ENCODE measurements at regions of chr22 and their contacts with region 1.

Region 1: GRCh38 chr22:37260901-37261336 is 16.9 kb upstream of the RAC2 start:
- DNase-seq: no peak
- ATAC-seq: peak; percentile 88
- H3K4me3 Mint-ChIP-seq: peak overlapping the region; percentile 2
- H3K27ac Mint-ChIP-seq: no peak overlapping the region
- H3K4me1 Mint-ChIP-seq: peaks cover 38% of the 10 kb centered on the region
- H3K27me3 Mint-ChIP-seq: no peaks in the 10 kb centered on the region
- CTCF ChIP-seq: peak; percentile 44

Region 2: GRCh38 chr22:36765943-36766450 is 494.9 kb before region 1 on chr22:
- CTCF ChIA-PET with region 1: no interaction called
- POLR2A ChIA-PET with region 1: no interaction called
- intact Hi-C with region 1: no loop called
- DNase-seq: no peak
- ATAC-seq: no peak
- H3K4me3 Mint-ChIP-seq: no peak overlapping the region
- H3K27ac Mint-ChIP-seq: no peak overlapping the region
- H3K4me1 Mint-ChIP-seq: no peaks in the 10 kb centered on the region
- H3K27me3 Mint-ChIP-seq: no peaks in the 10 kb centered on the region
- CTCF ChIP-seq: no peak

Region 3: GRCh38 chr22:37077884-37078485 is 182.9 kb before region 1 on chr22:
- CTCF ChIA-PET with region 1: interaction called, 8 read pairs
- POLR2A ChIA-PET with region 1: no interaction called
- intact Hi-C with region 1: loop called (anchors 1 kb)
- DNase-seq: peak; percentile 81
- ATAC-seq: peak; percentile 60
- H3K4me3 Mint-ChIP-seq: no peak overlapping the region
- H3K27ac Mint-ChIP-seq: peak overlapping the region; percentile 50
- H3K4me1 Mint-ChIP-seq: peaks cover 25% of the 10 kb centered on the region
- H3K27me3 Mint-ChIP-seq: no peaks in the 10 kb centered on the region
- CTCF ChIP-seq: peak; percentile 87

Region 4: DNA sequence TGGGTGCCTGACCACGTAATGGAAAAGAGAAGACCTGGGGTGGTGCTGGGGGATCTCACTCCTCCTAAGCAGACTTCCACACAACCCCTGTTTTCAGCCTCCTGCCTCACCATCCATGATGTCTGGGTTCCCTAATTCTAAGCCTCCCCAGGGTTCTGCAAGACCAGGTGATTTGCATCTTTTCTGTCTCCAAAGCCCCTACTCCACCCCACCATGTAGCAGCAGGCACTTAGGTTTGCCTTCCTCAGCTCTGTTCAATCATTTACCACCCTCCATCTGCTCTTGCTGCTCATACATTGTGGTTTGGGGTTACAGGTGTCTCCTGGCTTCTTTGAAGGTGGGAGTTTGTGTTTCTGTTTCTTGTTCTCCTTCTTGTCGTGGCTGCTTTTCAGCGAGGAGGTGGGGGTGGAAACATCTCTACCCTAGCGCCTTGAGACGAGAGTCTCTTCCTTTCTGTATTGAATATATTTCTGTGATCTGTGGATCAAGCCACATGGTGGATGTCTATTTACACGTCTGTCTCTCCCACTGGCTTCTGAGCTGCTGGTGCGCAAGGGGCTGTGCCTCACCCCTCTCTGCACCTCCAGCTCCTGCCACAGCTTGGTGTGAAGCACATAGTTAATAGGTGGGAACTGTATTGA is 42.0 kb before region 1 on chr22:
- CTCF ChIA-PET with region 1: interaction called, 59 read pairs
- POLR2A ChIA-PET with region 1: interaction called, 5 read pairs
- intact Hi-C with region 1: no loop called
- DNase-seq: no peak
- ATAC-seq: peak; percentile 83
- H3K4me3 Mint-ChIP-seq: peak overlapping the region; percentile 71
- H3K27ac Mint-ChIP-seq: peak overlapping the region; percentile 99
- H3K4me1 Mint-ChIP-seq: peaks cover 78% of the 10 kb centered on the region
- H3K27me3 Mint-ChIP-seq: no peaks in the 10 kb centered on the region
- CTCF ChIP-seq: no peak

Region 5: GRCh38 chr22:37244114-37244921 is 16.6 kb before region 1 on chr22 and contains the start of gene RAC2:
- CTCF ChIA-PET with region 1: interaction called, 139 read pairs
- POLR2A ChIA-PET with region 1: interaction called, 57 read pairs
- intact Hi-C with region 1: loop called (anchors 1 kb)
- DNase-seq: peak; percentile 77
- ATAC-seq: peak; percentile 59
- H3K4me3 Mint-ChIP-seq: peak within 1 kb of the TSS; percentile 97
- H3K27ac Mint-ChIP-seq: peak within 1 kb of the TSS; percentile 90
- H3K4me1 Mint-ChIP-seq: peaks cover 74% of the 10 kb centered on the region
- H3K27me3 Mint-ChIP-seq: no peaks in the 10 kb centered on the region
- CTCF ChIP-seq: no peak
- total RNA-seq, gene RAC2: 518 and 557 TPM in 2 replicates

Region 6: GRCh38 chr22:37282385-37282677 is 21.4 kb after region 1 on chr22 and contains the start of gene CYTH4:
- CTCF ChIA-PET with region 1: interaction called, 12 read pairs
- POLR2A ChIA-PET with region 1: interaction called, 4 read pairs
- intact Hi-C with region 1: no loop called
- DNase-seq: peak; percentile 64
- ATAC-seq: peak; percentile 69
- H3K4me3 Mint-ChIP-seq: peak within 1 kb of the TSS; percentile 86
- H3K27ac Mint-ChIP-seq: peak within 1 kb of the TSS; percentile 99
- H3K4me1 Mint-ChIP-seq: peaks cover 81% of the 10 kb centered on the region
- H3K27me3 Mint-ChIP-seq: no peaks in the 10 kb centered on the region
- CTCF ChIP-seq: no peak
- total RNA-seq, gene CYTH4: 37.2 and 40.3 TPM in 2 replicates

Region 7: DNA sequence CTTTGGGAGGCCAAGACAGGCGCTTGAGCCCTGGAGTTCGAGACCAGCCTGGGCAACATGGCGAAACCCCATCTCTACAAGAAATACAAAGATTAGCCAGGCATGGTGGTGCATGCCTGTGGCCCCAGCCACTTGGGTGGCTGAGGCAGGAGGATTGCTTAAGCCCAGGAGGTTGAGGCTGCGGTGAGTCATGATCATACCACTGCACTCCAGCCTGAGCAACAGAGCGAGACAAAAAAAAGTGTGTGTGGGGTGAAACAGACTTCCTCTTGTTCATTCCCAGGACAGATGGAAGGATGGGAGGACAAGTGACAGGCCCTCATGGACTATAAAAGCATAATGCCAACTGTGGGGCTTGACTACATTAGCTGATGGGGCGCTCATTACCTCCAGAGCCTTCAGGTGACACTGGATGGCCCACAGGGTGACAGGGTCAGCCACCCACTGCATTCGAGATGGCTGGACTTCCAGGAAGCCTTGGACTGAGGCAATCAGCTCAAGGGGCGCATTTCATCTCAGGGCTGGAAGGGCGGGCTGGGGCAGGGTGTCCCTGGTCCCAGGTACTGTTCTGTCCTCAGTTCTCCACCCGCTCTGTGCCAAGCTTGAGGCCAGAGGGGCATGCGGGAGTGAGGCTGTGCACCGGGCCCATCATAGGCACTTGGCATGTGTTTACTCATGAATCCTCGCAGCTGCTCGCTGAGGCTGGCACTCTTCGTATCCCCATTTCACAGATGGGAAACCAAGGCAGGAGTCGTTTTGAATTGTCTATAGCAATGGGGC is 1570.4 kb after region 1 on chr22:
- CTCF ChIA-PET with region 1: no interaction called
- POLR2A ChIA-PET with region 1: no interaction called
- intact Hi-C with region 1: no loop called
- DNase-seq: no peak
- ATAC-seq: no peak
- H3K4me3 Mint-ChIP-seq: no peak overlapping the region
- H3K27ac Mint-ChIP-seq: no peak overlapping the region
- H3K4me1 Mint-ChIP-seq: no peaks in the 10 kb centered on the region
- H3K27me3 Mint-ChIP-seq: peaks cover 14% of the 10 kb centered on the region
- CTCF ChIP-seq: no peak